Mammary epithelial cell (primary cell): ENCODE measurements at regions of chr5 and their contacts with region 1.

Region 1: GRCh38 chr5:73365301-73365853 is 83.2 kb downstream of the FOXD1 start:
- DNase-seq: peak; percentile 91
- H3K4me3 ChIP-seq: no peak overlapping the region
- H3K27ac ChIP-seq: peak overlapping the region; percentile 80
- H3K4me1 ChIP-seq: peaks cover 46% of the 10 kb centered on the region
- H3K27me3 ChIP-seq: no peaks in the 10 kb centered on the region
- CTCF ChIP-seq: no peak

Region 2: GRCh38 chr5:73088026-73088425 is 277.4 kb before region 1 on chr5:
- CTCF ChIA-PET with region 1: no interaction called
- dilution Hi-C with region 1: no loop called
- in situ Hi-C with region 1: no loop called
- intact Hi-C with region 1: loop called (anchors 10 kb)
- DNase-seq: no peak
- H3K4me3 ChIP-seq: no peak overlapping the region
- H3K27ac ChIP-seq: no peak overlapping the region
- H3K4me1 ChIP-seq: no peaks in the 10 kb centered on the region
- H3K27me3 ChIP-seq: no peaks in the 10 kb centered on the region
- CTCF ChIP-seq: no peak

Region 3: DNA sequence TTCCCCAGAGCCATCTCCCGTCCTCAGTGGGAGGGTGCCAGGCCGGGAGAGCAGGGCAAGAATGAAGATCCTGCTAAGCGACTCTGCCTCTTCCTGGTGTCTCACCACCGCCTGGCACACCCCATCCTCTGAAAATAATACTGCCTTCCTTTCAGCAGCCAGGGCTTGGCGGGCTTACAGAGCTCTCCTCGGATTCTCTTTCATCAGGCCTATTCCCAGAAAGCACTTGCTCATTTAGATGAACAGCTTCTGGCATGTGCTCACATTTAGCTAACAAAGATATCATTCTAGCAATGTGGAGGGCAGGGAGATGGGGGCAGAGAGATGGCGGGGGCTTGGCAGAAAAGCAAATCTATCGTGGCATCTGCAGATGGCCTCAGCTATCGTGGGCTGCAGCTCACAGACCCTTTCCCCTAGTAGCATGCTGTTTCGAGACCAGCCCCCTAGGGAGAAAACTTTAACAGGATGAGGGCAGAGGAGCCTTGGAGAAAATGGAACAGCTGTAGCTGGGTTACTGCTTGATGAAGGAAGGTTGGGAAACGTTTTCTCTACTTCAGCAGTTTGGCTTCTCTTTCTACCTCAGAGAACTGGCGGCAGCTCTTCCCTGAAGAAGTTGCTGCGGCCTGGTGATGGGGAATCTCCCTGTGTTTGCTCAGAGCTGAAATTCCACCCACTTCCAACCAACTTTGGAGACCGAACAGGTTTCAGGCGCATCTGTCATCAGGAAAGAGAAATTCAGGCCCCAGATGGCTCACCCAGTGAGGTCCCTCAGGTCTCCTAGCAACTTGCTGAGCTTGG is 90.3 kb before region 1 on chr5:
- CTCF ChIA-PET with region 1: no interaction called
- dilution Hi-C with region 1: no loop called
- in situ Hi-C with region 1: no loop called
- intact Hi-C with region 1: loop called (anchors 5 kb)
- DNase-seq: no peak
- H3K4me3 ChIP-seq: no peak overlapping the region
- H3K27ac ChIP-seq: no peak overlapping the region
- H3K4me1 ChIP-seq: peaks cover 14% of the 10 kb centered on the region
- H3K27me3 ChIP-seq: peaks cover 4% of the 10 kb centered on the region
- CTCF ChIP-seq: no peak

Region 4: GRCh38 chr5:73327908-73328455 is 37.4 kb before region 1 on chr5:
- CTCF ChIA-PET with region 1: no interaction called
- dilution Hi-C with region 1: no loop called
- in situ Hi-C with region 1: loop called in 1 of 2 experiments (anchors 5 kb)
- intact Hi-C with region 1: no loop called
- DNase-seq: peak; percentile 55
- H3K4me3 ChIP-seq: no peak overlapping the region
- H3K27ac ChIP-seq: no peak overlapping the region
- H3K4me1 ChIP-seq: peaks cover 15% of the 10 kb centered on the region
- H3K27me3 ChIP-seq: no peaks in the 10 kb centered on the region
- CTCF ChIP-seq: no peak

Region 5: DNA sequence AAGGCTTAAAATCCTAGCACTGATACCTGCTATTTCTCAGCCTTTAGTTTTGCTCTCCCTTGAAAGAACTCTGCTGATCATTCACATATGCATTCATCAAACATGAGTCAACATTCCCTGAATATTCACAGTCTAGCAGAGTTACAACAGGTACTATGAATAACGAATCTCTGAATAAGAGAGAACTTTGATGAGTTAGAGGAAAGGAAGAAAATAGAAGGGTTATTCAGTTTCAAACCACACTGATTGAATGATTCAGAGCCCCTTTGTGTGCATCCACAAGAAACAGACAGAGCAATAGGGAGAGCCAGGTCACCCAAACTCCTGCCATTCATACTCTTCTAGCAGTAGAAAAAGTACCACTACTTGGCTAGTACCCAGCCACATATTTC is 47.2 kb after region 1 on chr5:
- CTCF ChIA-PET with region 1: no interaction called
- dilution Hi-C with region 1: loop called (anchors 5 kb)
- in situ Hi-C with region 1: no loop called
- intact Hi-C with region 1: loop called (anchors 2 kb)
- DNase-seq: peak; percentile 95
- H3K4me3 ChIP-seq: no peak overlapping the region
- H3K27ac ChIP-seq: peak overlapping the region; percentile 64
- H3K4me1 ChIP-seq: peaks cover 27% of the 10 kb centered on the region
- H3K27me3 ChIP-seq: no peaks in the 10 kb centered on the region
- CTCF ChIP-seq: no peak

Region 6: DNA sequence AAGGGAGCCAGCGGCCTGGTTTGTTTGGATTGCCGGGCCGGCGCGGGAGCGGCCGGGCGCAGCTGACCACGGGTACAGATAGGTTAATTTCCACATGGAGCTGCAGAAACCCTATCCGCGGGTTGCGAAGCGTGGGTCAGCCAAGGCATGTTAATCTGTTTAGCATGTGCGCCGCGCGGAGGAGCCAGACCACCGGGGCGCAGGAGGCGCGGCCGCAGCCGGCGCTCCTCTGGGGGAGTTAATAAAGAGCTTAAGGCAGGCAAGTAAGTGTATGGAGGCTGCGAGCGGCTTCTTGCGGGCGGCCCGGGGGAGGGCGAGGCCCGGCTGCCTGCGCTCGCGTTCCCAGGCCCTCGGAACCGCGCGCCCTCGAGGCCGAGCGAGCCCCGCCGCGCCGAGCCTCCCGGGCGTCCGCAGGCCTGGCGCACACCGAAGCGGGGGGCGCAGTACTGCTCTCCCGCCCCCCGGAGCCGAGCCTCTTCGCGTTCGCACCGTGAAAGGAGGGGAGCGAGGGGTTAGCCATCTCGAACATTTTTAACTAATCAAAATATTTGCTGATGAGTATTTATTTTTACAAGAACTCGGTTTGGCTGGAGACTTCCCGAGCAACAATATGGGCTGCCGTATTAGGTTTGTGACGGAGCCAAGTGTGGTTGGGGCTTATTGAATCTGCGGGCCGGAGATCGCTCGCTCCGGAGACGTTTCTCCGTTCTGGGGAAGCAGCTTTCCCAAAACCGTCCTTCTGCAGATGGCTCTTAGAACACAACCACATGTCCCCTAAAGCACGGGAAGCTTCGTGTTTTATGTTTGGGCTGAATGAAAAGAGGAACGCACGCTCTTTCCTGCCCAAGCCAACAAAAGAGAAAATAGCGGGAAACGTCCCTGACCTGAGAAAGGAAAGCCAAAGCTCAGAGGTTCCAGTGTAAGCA is 54.4 kb after region 1 on chr5:
- CTCF ChIA-PET with region 1: no interaction called
- dilution Hi-C with region 1: loop called (anchors 5 kb)
- in situ Hi-C with region 1: no loop called
- intact Hi-C with region 1: no loop called
- DNase-seq: no peak
- H3K4me3 ChIP-seq: peak overlapping the region in 2 of 3 experiments; percentile 22 to 31
- H3K27ac ChIP-seq: no peak overlapping the region
- H3K4me1 ChIP-seq: peaks cover 16% of the 10 kb centered on the region
- H3K27me3 ChIP-seq: no peaks in the 10 kb centered on the region
- CTCF ChIP-seq: no peak

Region 7: DNA sequence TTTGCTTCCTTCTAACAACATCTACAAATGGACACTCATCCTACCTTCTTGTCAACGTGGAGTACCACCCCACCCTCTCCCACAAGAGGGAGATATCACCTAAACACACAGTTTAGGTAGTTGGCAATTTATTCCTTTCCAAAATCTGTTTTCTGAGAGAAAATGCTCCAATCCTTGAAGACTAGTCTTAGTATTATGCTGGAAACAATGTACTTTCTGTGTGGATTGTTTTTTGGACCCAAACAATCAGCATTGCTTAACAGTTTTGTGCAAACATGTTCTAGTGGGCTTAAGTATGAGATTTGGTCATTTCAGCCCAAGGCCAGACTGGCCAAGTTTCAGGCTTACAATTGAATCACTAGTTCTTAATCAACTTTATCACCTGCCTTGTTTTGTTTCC is 619.8 kb after region 1 on chr5:
- CTCF ChIA-PET with region 1: no interaction called
- dilution Hi-C with region 1: no loop called
- in situ Hi-C with region 1: no loop called
- intact Hi-C with region 1: no loop called
- DNase-seq: peak; percentile 83
- H3K4me3 ChIP-seq: no peak overlapping the region
- H3K27ac ChIP-seq: peak overlapping the region; percentile 38
- H3K4me1 ChIP-seq: peaks cover 30% of the 10 kb centered on the region
- H3K27me3 ChIP-seq: no peaks in the 10 kb centered on the region
- CTCF ChIP-seq: peak; percentile 54 to 56